Activated CD8-positive, alpha-beta memory T cell treated with anti-CD3 and anti-CD28 coated beads, Interleukin-2, amount 10 ng/mL, durations not matched to agents 7 days and 5 days (primary cell): ENCODE measurements at regions of chr20 and their contacts with region 1.

Region 1: GRCh38 chr20:51385646-51386530 is 156.6 kb downstream of the NFATC2 start:
- DNase-seq: peak; percentile 61
- ATAC-seq: peak; percentile 46
- H3K4me3 Mint-ChIP-seq: peak overlapping the region; percentile 36
- H3K27ac Mint-ChIP-seq: peak overlapping the region; percentile 86
- H3K4me1 Mint-ChIP-seq: peaks cover 76% of the 10 kb centered on the region
- H3K27me3 Mint-ChIP-seq: no peaks in the 10 kb centered on the region

Region 2: DNA sequence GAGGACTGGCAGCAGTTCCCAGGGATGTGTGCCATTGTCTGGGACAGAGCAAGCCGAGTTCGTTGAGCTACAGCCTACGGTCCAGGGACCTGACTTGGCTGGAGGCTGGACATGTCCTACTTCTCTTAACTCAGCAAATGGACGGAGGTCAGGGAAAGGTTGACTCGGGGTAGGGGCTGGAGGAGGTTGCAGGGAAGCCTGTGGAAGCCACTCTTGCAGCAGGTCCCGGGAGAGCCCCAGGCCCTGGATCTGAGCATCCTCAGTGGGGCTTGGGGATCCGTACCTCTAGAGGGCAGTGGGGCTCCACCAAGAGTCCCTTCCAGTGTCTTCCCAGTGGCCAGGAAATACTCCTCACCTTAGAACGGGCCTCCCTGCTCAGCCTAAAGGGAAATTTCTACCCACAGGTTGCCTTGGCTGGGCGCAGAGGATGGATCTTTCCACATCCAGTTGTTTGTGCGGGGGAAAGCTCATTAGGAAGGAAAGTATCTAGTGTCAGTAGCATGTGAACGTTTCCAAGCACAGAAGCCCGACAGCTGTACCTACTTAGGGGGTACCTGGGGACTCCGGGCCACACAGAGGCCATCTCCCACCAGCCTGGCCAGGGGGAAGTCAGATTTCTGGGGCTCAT is 13.6 kb before region 1 on chr20:
- CTCF ChIA-PET with region 1: interaction called, 16 read pairs
- DNase-seq: peak; percentile 68
- ATAC-seq: peak; percentile 85
- H3K4me3 Mint-ChIP-seq: no peak overlapping the region
- H3K27ac Mint-ChIP-seq: no peak overlapping the region
- H3K4me1 Mint-ChIP-seq: peaks cover 25% of the 10 kb centered on the region
- H3K27me3 Mint-ChIP-seq: no peaks in the 10 kb centered on the region

Region 3: GRCh38 chr20:51412333-51412871 is 26.5 kb after region 1 on chr20:
- CTCF ChIA-PET with region 1: interaction called, 22 read pairs
- DNase-seq: no peak
- ATAC-seq: no peak
- H3K4me3 Mint-ChIP-seq: no peak overlapping the region
- H3K27ac Mint-ChIP-seq: peak overlapping the region; percentile 79
- H3K4me1 Mint-ChIP-seq: peaks cover 90% of the 10 kb centered on the region
- H3K27me3 Mint-ChIP-seq: no peaks in the 10 kb centered on the region

Region 4: DNA sequence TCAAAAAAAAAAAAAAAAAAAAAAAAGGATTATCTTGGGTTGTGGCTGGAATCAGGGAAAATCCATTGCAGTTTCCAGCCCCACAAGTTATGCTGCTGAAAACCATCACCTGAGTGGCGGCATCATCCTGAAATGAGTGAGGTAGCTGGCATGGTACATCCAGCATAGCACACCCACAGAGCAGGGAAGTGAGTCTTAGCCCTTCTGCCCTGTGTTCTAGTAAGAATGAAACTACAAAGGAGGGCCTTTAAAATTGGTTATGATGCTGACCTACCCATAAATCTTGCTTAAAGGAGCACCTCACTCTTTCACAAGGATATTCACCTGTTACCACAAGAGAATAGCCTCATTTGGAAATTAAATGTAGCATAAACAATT is 37.4 kb after region 1 on chr20:
- CTCF ChIA-PET with region 1: interaction called, 22 read pairs
- DNase-seq: peak; percentile 68
- ATAC-seq: peak; percentile 54
- H3K4me3 Mint-ChIP-seq: peak overlapping the region; percentile 5
- H3K27ac Mint-ChIP-seq: peak overlapping the region; percentile 96
- H3K4me1 Mint-ChIP-seq: peaks cover 86% of the 10 kb centered on the region
- H3K27me3 Mint-ChIP-seq: no peaks in the 10 kb centered on the region

Region 5: GRCh38 chr20:51500311-51500710 is 114.4 kb after region 1 on chr20:
- CTCF ChIA-PET with region 1: interaction called, 18 read pairs
- DNase-seq: peak; percentile 82
- ATAC-seq: peak; percentile 92
- H3K4me3 Mint-ChIP-seq: no peak overlapping the region
- H3K27ac Mint-ChIP-seq: peak overlapping the region; percentile 68
- H3K4me1 Mint-ChIP-seq: peaks cover 85% of the 10 kb centered on the region
- H3K27me3 Mint-ChIP-seq: no peaks in the 10 kb centered on the region

Region 6: GRCh38 chr20:51541189-51542032 is 155.5 kb after region 1 on chr20:
- CTCF ChIA-PET with region 1: interaction called, 45 read pairs
- DNase-seq: peak; percentile 93
- ATAC-seq: peak; percentile 79
- H3K4me3 Mint-ChIP-seq: peak overlapping the region; percentile 97
- H3K27ac Mint-ChIP-seq: peak overlapping the region; percentile 99
- H3K4me1 Mint-ChIP-seq: peaks cover 52% of the 10 kb centered on the region
- H3K27me3 Mint-ChIP-seq: peaks cover 29% of the 10 kb centered on the region